ENCODE measurements at regions of chr6 and their contacts with region 1.

Region 1: GRCh38 chr6:104955927-104956730 is 778 bp upstream of the LIN28B start:
- DNase-seq: peak; percentile 72 to 79
- H3K4me3 ChIP-seq: peak overlapping the region; percentile 35 to 90 (median 38); a peak in 7 of 8 replicates
- H3K27ac ChIP-seq: peak overlapping the region; percentile 98
- H3K4me1 ChIP-seq: peaks cover 2 to 7% (median 5%) of the 10 kb centered on the region in 4 experiments; a peak in 4 of 7 replicates
- H3K27me3 ChIP-seq: no peaks in the 10 kb centered on the region
- CTCF ChIP-seq: no peak
- EP300 ChIP-seq: peak in 1 of 2 experiments; percentile 86; a peak in 1 of 3 replicates
- POLR2A ChIP-seq: peak; percentile 80 to 81
- RAD21 ChIP-seq: peak; percentile 39 to 44

Region 2: GRCh38 chr6:104940881-104941728 is 15.0 kb before region 1 on chr6:
- CTCF ChIA-PET with region 1: interaction called, 8 read pairs
- POLR2A ChIA-PET with region 1: interaction called, 251 read pairs
- DNase-seq: peak in 1 of 2 experiments; percentile 89
- H3K4me3 ChIP-seq: peak overlapping the region; percentile 52 to 95 (median 74)
- H3K27ac ChIP-seq: peak overlapping the region; percentile 87
- H3K4me1 ChIP-seq: peaks cover 0 to 9% (median 4%) of the 10 kb centered on the region in 4 experiments; a peak in 3 of 7 replicates
- H3K27me3 ChIP-seq: no peaks in the 10 kb centered on the region
- CTCF ChIP-seq: peak; percentile 71 to 90 (median 75)
- EP300 ChIP-seq: 0 out of 3 replicates have a peak, but pooled peaks of 1 of the 2 experiments have one; percentile 20
- POLR2A ChIP-seq: peak in 1 of 2 experiments; percentile 33; a peak in 2 of 3 replicates
- RAD21 ChIP-seq: peak; percentile 79 to 80

Region 3: DNA sequence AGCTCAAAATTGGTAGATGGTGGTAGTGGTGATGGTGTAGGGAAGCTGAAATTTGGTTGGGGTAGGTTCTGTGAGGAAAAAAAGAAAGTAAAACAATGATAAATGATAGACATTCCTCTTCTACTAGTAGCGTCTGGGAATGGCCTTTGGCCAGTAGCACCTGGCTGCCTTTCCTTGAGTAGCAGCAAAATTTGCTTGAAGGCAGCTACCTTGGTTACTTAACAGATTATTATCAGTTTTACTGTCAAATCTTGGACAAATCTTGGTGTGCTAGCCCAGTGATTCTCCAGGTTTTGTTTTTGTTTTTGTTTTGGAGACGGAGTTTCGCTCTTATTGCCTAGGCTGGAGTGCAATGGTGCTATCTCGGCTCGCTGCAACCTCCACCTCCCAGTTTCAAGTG is 27.2 kb after region 1 on chr6:
- CTCF ChIA-PET with region 1: interaction called, 3 read pairs
- POLR2A ChIA-PET with region 1: interaction called, 32 read pairs
- DNase-seq: no peak
- H3K4me3 ChIP-seq: no peak overlapping the region
- H3K27ac ChIP-seq: no peak overlapping the region
- H3K4me1 ChIP-seq: no peaks in the 10 kb centered on the region; a peak in 1 of 7 replicates
- H3K27me3 ChIP-seq: no peaks in the 10 kb centered on the region
- CTCF ChIP-seq: no peak
- EP300 ChIP-seq: no peak
- POLR2A ChIP-seq: no peak
- RAD21 ChIP-seq: no peak

Region 4: GRCh38 chr6:105001906-105002305 is 45.8 kb after region 1 on chr6:
- CTCF ChIA-PET with region 1: no interaction called
- POLR2A ChIA-PET with region 1: interaction called, 41 read pairs
- DNase-seq: no peak
- H3K4me3 ChIP-seq: no peak overlapping the region
- H3K27ac ChIP-seq: no peak overlapping the region
- H3K4me1 ChIP-seq: no peaks in the 10 kb centered on the region; a peak in 3 of 7 replicates
- H3K27me3 ChIP-seq: no peaks in the 10 kb centered on the region
- CTCF ChIP-seq: no peak
- EP300 ChIP-seq: no peak
- POLR2A ChIP-seq: no peak
- RAD21 ChIP-seq: no peak

Region 5: GRCh38 chr6:105038259-105038658 is 82.1 kb after region 1 on chr6:
- CTCF ChIA-PET with region 1: no interaction called
- POLR2A ChIA-PET with region 1: interaction called, 17 read pairs
- DNase-seq: no peak
- H3K4me3 ChIP-seq: no peak overlapping the region
- H3K27ac ChIP-seq: no peak overlapping the region
- H3K4me1 ChIP-seq: peaks cover 0 to 15% (median 4%) of the 10 kb centered on the region in 4 experiments; a peak in 2 of 7 replicates
- H3K27me3 ChIP-seq: no peaks in the 10 kb centered on the region
- CTCF ChIP-seq: no peak
- EP300 ChIP-seq: no peak
- POLR2A ChIP-seq: no peak
- RAD21 ChIP-seq: peak; percentile 32 to 47

Region 6: DNA sequence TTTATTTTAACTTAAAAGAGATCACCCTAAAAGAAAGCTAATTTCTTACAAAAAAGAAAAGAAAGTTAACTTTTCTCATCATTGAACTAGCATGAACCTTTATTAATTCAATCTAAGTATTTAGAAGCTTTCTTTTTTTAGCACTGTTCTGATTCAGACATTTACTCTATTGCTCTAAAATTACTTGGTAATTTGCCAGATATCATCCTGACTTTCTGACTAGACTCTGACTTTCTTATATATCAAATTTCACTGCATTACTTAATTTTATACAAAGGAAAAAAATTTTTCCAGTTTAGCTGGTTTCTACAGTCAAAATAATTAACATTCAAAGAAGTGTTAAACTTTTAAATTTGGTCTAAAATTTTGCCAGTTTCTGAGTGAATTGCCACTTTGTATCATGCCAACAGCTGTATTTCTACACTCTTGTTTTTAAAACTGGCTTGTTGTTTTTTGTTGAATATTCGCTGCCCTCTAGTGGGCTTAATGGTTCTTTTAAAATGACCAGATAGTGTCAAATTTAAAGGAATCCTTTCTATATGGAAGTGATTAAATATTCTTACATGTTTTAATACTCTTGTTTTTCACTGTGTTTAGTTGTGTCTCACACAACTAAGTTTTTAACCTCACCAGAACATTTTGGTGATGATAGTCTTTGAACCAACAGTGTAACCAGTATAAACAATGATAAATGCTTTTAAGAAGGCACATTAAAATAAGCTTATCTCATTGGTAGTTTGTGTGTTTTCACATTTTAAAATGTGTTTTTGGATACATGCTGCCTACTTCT is 121.7 kb after region 1 on chr6:
- CTCF ChIA-PET with region 1: interaction called, 5 read pairs
- POLR2A ChIA-PET with region 1: interaction called, 22 read pairs
- DNase-seq: no peak
- H3K4me3 ChIP-seq: no peak overlapping the region
- H3K27ac ChIP-seq: no peak overlapping the region
- H3K4me1 ChIP-seq: no peaks in the 10 kb centered on the region
- H3K27me3 ChIP-seq: no peaks in the 10 kb centered on the region
- CTCF ChIP-seq: peak in 2 of 3 experiments; percentile 24 to 31; a peak in 2 of 4 replicates
- EP300 ChIP-seq: no peak
- POLR2A ChIP-seq: no peak
- RAD21 ChIP-seq: peak; percentile 63 to 74

Region 7: DNA sequence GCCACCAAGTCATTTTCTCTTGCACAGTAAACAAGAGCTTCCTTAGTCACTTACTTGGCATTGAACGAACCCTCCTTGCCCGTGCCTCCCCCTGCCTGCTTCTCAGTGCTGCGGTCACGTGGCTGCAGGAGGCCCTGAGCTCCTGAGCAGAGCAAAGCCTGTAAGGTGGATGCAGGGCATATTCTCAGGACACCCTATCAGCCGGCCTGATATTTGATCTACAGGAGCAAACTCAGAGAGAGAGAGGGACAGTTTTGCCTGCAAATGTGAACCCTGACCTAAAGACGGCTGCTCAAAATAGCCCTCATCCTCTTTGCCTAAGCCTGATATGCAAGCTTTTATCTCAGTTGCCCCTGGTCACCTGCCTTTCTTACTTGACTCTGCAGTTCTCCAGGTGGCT is 316.7 kb after region 1 on chr6:
- CTCF ChIA-PET with region 1: no interaction called
- POLR2A ChIA-PET with region 1: no interaction called
- DNase-seq: no peak
- H3K4me3 ChIP-seq: no peak overlapping the region
- H3K27ac ChIP-seq: no peak overlapping the region
- H3K4me1 ChIP-seq: peaks cover 0 to 4% (median 3%) of the 10 kb centered on the region in 4 experiments; a peak in 3 of 7 replicates
- H3K27me3 ChIP-seq: no peaks in the 10 kb centered on the region
- CTCF ChIP-seq: no peak
- EP300 ChIP-seq: no peak
- POLR2A ChIP-seq: no peak
- RAD21 ChIP-seq: 0 out of 4 replicates have a peak, but pooled peaks of 1 of the 2 experiments have one; percentile 8